AG04449 (cell line): ENCODE measurements at regions of chr11 and their contacts with region 1.

Region 1: GRCh38 chr11:71977743-71978418 is 20.8 kb upstream of the IL18BP start:
- DNase-seq: no peak
- H3K4me3 ChIP-seq: no peak overlapping the region
- CTCF ChIP-seq: peak; percentile 57

Region 2: GRCh38 chr11:71774603-71775222 is 203.2 kb before region 1 on chr11:
- CTCF ChIA-PET with region 1: no interaction called
- POLR2A ChIA-PET with region 1: no interaction called
- DNase-seq: no peak
- H3K4me3 ChIP-seq: no peak overlapping the region
- CTCF ChIP-seq: no peak

Region 3: DNA sequence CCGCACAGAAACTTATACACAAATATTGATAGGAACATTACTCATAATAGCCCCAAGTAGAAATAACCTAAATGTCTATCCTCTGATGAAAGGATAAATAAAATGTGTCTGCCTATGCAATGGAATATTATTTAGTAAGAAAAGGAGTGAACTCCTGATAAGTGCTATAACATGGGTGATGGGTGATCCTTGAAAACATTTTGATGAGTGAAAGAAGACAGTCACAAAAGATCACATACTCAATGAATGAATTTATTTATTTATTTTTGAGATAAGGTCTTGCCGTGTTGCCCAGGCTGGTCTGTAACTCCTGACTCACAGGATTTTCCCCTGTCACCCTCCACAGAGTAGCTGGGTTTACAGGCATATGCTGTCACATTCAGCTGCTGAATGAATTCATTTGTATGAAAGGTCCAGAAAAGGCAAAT is 31.7 kb before region 1 on chr11:
- CTCF ChIA-PET with region 1: interaction called, 11 read pairs
- POLR2A ChIA-PET with region 1: no interaction called
- DNase-seq: no peak
- H3K4me3 ChIP-seq: no peak overlapping the region
- CTCF ChIP-seq: no peak

Region 4: DNA sequence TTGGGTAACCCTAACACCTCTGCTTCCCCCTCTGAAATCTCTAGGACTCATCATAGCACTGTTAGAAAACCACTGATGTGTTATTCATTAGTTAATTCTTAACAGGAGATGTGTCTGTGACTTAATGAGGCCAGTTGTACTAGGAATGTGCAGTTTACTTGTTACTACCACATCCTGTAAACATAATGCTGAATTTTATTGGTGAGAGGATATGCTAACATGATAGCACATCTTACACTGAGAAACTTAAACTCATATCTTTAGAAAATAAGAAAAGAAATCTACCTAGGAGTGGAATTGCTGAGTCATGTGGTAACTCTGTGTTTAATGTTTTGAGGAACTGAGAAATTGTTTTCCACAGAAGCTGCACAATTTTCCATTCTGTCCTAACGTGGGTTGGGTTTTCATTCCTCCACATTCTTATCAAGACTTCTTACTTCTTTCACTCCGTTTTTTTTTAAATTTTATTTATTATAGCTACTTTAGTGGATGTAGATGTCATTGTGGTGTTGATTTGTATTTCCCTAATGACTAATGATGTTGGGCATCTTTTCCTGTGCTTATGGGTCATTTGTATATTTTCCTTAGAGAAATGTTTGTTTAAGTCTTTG is 15.3 kb before region 1 on chr11:
- CTCF ChIA-PET with region 1: interaction called, 92 read pairs
- POLR2A ChIA-PET with region 1: no interaction called
- DNase-seq: no peak
- H3K4me3 ChIP-seq: no peak overlapping the region
- CTCF ChIP-seq: no peak

Region 5: DNA sequence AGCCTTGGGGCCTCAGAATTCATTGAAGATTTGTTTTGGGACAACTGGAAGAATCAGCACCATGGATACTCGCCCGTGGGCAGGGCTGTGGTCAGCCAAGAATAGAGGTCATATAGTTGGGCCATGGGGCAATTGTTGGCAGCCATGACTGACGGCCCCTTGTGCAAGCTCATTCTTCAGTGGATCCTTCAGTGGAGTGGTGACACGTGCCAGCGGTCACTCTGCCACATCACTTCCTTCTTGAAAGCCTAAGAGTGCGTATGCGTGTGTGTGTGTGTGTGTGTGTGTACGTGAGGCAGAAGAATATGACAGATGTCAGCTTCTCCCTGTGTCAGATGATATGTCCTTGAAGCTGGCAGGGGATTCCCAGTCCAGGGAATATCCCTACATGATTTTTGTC is 19.1 kb after region 1 on chr11:
- CTCF ChIA-PET with region 1: interaction called, 95 read pairs
- POLR2A ChIA-PET with region 1: no interaction called
- DNase-seq: no peak
- H3K4me3 ChIP-seq: no peak overlapping the region
- CTCF ChIP-seq: no peak

Region 6: GRCh38 chr11:72015511-72016171 is 37.8 kb after region 1 on chr11:
- CTCF ChIA-PET with region 1: interaction called, 60 read pairs
- POLR2A ChIA-PET with region 1: no interaction called
- DNase-seq: no peak
- H3K4me3 ChIP-seq: no peak overlapping the region
- CTCF ChIP-seq: peak; percentile 58

Region 7: DNA sequence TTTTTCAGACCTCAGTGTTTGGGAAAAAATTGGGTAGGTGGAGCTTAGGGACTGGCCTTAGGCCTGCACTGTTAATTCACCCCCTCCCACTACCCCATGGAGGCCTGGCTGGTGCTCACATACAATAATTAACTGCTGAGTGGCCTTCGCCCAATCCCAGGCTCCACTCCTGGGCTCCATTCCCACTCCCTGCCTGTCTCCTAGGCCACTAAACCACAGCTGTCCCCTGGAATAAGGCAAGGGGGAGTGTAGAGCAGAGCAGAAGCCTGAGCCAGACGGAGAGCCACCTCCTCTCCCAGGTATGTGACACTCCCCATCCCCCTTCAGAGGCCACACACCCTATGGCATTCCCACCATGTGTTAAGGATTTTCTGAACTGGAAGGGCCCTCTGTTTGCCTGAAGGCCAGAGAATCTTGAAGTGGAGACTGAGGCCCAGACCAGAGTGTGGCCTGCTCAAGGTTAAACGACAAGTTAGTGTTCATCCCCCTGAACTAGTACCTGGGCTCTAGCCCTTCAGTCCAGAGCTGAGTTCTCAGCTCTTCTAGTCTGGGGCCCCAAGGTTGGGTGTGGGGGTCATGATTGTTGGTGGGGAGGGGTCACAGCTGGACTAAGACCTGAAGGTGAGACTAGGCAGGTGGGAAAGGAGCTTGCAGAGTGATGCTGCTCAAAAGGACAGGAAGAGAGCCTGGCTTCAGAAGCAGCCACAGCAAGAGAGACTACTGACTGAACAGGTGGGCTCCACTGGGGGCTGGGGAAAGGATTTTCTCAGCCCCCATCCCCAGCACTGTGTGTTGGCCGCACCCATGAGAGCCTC is 211.8 kb after region 1 on chr11:
- CTCF ChIA-PET with region 1: interaction called, 48 read pairs
- POLR2A ChIA-PET with region 1: no interaction called
- DNase-seq: no peak
- H3K4me3 ChIP-seq: no peak overlapping the region
- CTCF ChIP-seq: no peak

Region 8: GRCh38 chr11:72446902-72447769 is 469.3 kb after region 1 on chr11:
- CTCF ChIA-PET with region 1: interaction called, 15 read pairs
- POLR2A ChIA-PET with region 1: no interaction called
- DNase-seq: no peak
- H3K4me3 ChIP-seq: no peak overlapping the region
- CTCF ChIP-seq: peak; percentile 56